ENCODE measurements at regions of chr12 and their contacts with region 1.

Region 1: GRCh38 chr12:104108755-104109445 is 29.1 kb downstream of the NFYB start:
- DNase-seq: peak; percentile 69
- H3K4me3 ChIP-seq: no peak overlapping the region
- H3K27ac ChIP-seq: no peak overlapping the region
- H3K27me3 ChIP-seq: no peaks in the 10 kb centered on the region
- CTCF ChIP-seq: peak; percentile 97

Region 2: DNA sequence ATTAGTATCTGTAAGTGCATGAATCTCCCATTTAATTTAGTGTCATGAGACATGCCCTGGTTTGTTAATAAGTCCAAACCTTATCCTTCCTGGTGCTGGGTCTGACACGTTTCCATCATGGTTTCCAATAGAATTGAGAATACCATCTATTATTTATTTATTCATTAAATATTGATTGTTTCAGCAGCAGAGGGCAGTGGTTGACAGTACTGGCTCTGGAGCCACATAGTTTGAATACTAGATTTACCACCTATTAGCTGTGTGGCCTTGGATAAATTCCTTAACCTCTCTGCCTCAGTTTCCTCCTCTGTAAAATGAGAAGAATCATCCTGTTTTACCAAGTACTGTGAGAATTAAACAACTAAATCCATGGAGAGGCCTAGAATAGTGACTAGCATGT is 522.8 kb before region 1 on chr12:
- CTCF ChIA-PET with region 1: no interaction called
- POLR2A ChIA-PET with region 1: no interaction called
- DNase-seq: no peak
- H3K4me3 ChIP-seq: no peak overlapping the region
- H3K27ac ChIP-seq: no peak overlapping the region
- H3K27me3 ChIP-seq: peaks cover 3% of the 10 kb centered on the region
- CTCF ChIP-seq: no peak

Region 3: GRCh38 chr12:103877934-103878510 is 230.9 kb before region 1 on chr12:
- CTCF ChIA-PET with region 1: interaction called, 21 read pairs
- POLR2A ChIA-PET with region 1: no interaction called
- DNase-seq: peak; percentile 29
- H3K4me3 ChIP-seq: no peak overlapping the region
- H3K27ac ChIP-seq: no peak overlapping the region
- H3K27me3 ChIP-seq: no peaks in the 10 kb centered on the region
- CTCF ChIP-seq: peak; percentile 84

Region 4: DNA sequence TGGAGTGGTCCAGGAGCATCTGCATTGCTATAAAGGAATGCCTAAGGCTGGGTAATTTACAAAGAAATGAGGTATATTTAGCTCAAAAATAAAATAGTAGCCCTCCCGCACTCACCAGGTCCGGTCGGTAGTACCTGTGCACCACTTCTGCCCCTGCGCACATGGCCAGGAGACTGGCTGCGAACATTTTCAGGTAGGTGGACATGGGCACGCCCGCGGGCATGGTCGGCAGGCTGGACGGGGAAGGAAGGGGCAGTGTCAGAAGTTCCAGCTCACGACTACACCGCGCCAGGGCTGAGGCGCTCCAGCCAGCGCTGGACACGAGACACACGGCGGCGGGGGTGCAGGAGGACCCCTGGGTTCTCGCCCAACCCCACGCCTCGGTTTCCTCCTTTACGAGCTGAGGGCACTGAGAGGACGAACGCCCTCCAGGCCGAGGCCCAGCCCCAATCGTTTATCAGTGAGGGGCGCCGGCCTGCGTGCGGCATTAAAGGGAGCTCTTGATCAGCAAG is 152.3 kb before region 1 on chr12:
- CTCF ChIA-PET with region 1: interaction called, 14 read pairs
- POLR2A ChIA-PET with region 1: no interaction called
- DNase-seq: no peak
- H3K4me3 ChIP-seq: peak overlapping the region; percentile 83
- H3K27ac ChIP-seq: peak overlapping the region; percentile 91
- H3K27me3 ChIP-seq: no peaks in the 10 kb centered on the region
- CTCF ChIP-seq: no peak

Region 5: GRCh38 chr12:103997286-103997900 is 111.5 kb before region 1 on chr12:
- CTCF ChIA-PET with region 1: interaction called, 13 read pairs
- POLR2A ChIA-PET with region 1: no interaction called
- DNase-seq: no peak
- H3K4me3 ChIP-seq: no peak overlapping the region
- H3K27ac ChIP-seq: peak overlapping the region; percentile 22
- H3K27me3 ChIP-seq: no peaks in the 10 kb centered on the region
- CTCF ChIP-seq: no peak

Region 6: DNA sequence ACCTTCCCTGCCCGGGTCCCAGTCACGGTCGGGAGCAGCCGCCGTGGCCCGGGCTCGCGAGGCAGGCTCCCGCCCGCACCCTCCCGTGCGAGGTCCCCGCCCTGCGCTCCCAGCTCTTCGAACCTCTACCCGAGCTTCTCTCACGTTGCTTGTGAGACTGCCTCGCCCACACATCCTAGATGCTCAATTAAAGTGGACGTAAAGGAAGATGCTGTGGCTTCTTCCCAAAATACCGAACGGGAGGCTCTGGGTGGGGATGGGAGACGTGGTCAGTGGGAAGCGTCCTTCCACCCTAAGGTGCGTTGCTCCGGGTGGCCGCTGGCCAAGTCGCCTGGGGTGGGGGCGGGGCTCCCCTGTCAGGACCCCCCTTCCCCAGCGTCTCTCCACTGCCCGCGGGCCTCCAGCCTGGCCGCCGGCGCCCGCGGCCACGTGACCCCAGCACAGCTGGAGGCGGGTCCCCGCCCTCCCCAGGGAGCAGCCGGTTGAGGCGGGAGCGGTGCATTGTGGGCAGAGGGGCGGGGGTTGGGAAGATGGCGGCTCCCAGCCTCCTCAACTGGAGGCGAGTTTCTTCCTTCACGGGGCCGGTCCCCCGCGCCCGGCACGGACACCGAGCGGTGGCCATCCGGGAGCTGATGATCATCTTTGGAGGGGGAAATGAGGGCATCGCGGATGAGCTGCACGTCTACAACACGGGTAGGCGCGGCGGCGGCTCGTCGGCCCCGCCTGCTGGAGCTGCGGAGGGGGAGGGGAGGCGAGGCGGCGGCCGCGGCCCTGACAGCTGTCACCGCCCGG is 44.7 kb before region 1 on chr12 and contains the start of gene HCFC2:
- CTCF ChIA-PET with region 1: interaction called, 47 read pairs
- POLR2A ChIA-PET with region 1: interaction called, 5 read pairs
- DNase-seq: peak; percentile 70
- H3K4me3 ChIP-seq: peak within 1 kb of the TSS; percentile 93
- H3K27ac ChIP-seq: peak within 1 kb of the TSS; percentile 91
- H3K27me3 ChIP-seq: no peaks in the 10 kb centered on the region
- CTCF ChIP-seq: no peak
- polyA plus RNA-seq, gene HCFC2: 20.8 and 31.4 TPM in 2 replicates

Region 7: DNA sequence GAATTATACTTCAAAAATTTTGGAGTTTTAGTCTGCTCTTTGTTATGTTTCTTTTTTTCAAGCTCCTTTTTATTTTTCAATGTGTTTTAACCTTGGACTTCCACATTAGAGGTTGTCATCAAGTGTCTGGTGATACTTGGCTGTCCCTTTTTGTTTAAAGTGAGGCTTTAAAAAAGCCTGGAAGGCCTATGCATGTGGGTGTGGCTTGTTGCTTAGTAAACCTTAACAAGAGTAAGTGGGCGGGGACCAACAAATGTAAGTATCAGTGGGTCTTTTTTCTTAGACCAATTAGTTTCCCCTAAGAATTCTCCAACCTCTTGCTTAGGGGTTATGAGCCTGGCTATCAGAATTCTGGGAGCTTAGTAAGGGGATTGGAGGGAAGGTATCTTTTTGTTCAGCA is 18.2 kb before region 1 on chr12:
- CTCF ChIA-PET with region 1: interaction called, 82 read pairs
- POLR2A ChIA-PET with region 1: interaction called, 6 read pairs
- DNase-seq: no peak
- H3K4me3 ChIP-seq: no peak overlapping the region
- H3K27ac ChIP-seq: no peak overlapping the region
- H3K27me3 ChIP-seq: no peaks in the 10 kb centered on the region
- CTCF ChIP-seq: no peak

Region 8: DNA sequence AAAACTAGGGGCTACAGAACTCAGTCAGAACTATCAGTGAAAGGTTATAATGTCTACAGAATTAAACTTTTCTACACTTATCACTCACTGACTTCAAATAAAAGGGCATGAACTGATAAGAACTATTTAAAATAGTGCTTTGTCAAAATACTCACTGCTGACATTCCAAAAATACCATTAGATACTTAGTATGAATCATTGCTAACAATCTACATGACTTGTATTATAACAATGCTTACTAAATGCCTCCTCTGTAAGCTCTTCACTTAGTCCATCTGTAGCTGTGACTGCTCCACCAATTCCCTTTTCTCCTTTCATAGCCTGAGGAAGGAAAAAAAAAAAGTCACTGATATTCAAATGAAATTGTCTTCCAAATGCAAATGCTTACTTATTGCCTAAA is 12.1 kb after region 1 on chr12:
- CTCF ChIA-PET with region 1: interaction called, 34 read pairs
- POLR2A ChIA-PET with region 1: no interaction called
- DNase-seq: peak; percentile 29
- H3K4me3 ChIP-seq: no peak overlapping the region
- H3K27ac ChIP-seq: no peak overlapping the region
- H3K27me3 ChIP-seq: no peaks in the 10 kb centered on the region
- CTCF ChIP-seq: no peak

Region 9: DNA sequence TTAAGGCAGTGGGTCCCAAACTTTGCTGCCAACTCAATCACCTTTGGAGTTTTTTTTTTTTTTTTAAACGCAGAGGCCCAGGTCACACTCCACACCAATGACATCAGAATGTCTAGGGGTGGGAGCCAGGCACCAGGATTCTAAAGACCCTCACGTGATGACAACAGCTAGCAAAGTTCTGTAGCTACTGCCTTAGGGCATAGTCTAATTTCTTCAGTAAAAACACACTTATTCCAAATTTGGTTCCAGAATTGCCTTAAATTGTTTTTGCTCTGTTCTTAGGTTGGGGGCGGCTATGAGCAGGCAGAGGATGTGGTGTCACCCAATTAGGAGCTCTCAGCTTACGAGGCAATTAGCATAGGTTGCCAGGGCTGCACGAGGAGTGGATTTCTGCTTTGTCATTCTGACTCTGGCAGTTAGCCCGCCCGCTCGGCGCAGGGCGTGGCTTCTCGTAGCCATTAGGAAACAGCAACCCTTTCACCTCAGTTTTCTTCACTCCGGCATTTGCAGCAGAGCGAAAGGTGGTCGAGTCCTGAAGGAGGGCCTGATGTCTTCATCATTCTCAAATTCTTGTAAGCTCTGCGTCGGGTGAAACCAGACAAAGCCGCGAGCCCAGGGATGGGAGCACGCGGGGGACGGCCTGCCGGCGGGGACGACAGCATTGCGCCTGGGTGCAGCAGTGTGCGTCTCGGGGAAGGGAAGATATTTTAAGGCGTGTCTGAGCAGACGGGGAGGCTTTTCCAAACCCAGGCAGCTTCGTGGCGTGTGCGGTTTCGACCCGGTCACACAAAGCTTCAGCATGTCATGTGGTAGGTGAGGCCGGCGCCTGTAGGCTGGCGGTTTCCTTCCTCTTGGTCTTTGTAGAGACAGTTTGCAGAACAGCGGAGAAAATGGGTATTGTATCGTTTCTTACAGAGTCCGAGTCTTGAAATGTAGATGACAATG is 177.9 kb after region 1 on chr12:
- CTCF ChIA-PET with region 1: no interaction called
- POLR2A ChIA-PET with region 1: no interaction called
- DNase-seq: peak; percentile 94
- H3K4me3 ChIP-seq: peak overlapping the region; percentile 92
- H3K27ac ChIP-seq: peak overlapping the region; percentile 99
- H3K27me3 ChIP-seq: no peaks in the 10 kb centered on the region
- CTCF ChIP-seq: no peak

Measured in AG04450 (cell line).